ENCODE measurements at regions of chr1 and their contacts with region 1.

Region 1: GRCh38 chr1:150293433-150294168 is at the start of gene MRPS21:
- DNase-seq: peak; percentile 94
- H3K4me3 Mint-ChIP-seq: peak within 1 kb of the TSS; percentile 96
- H3K27ac Mint-ChIP-seq: peak within 1 kb of the TSS; percentile 94
- H3K4me1 Mint-ChIP-seq: peaks cover 39% of the 10 kb centered on the region
- H3K27me3 Mint-ChIP-seq: no peaks in the 10 kb centered on the region
- total RNA-seq, gene MRPS21: 78.6 to 82.9 TPM

Region 2: DNA sequence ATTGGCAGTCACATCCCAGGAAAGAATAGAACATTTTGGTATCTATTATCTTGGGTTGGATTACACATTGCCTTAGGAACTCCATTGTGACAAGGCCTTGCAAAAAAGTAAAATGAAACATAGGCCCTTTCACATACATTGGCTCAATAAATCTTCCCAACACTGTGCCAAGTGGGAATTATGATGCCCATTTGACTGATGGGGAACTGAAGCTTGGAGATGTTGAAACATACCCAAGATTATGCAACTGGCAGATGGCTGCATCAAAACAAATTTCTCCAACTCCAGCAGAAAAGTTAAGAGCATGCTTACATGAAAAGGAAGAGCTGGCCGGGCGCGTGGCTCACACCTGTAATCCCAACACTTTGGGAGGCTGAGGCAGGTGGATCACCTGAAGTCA is 117.0 kb before region 1 on chr1:
- CTCF ChIA-PET with region 1: no interaction called
- POLR2A ChIA-PET with region 1: no interaction called
- intact Hi-C with region 1: no loop called
- DNase-seq: no peak
- H3K4me3 Mint-ChIP-seq: no peak overlapping the region
- H3K27ac Mint-ChIP-seq: no peak overlapping the region
- H3K4me1 Mint-ChIP-seq: no peaks in the 10 kb centered on the region
- H3K27me3 Mint-ChIP-seq: no peaks in the 10 kb centered on the region

Region 3: GRCh38 chr1:150268705-150269403 is 24.7 kb before region 1 on chr1 and contains the start of gene APH1A:
- CTCF ChIA-PET with region 1: no interaction called
- POLR2A ChIA-PET with region 1: interaction called, 4 read pairs
- intact Hi-C with region 1: loop called (anchors 1 kb)
- DNase-seq: peak; percentile 97
- H3K4me3 Mint-ChIP-seq: peak within 1 kb of the TSS; percentile 97
- H3K27ac Mint-ChIP-seq: peak within 1 kb of the TSS; percentile 93
- H3K4me1 Mint-ChIP-seq: peaks cover 22% of the 10 kb centered on the region
- H3K27me3 Mint-ChIP-seq: no peaks in the 10 kb centered on the region
- total RNA-seq, gene APH1A: 96.6 to 96.8 TPM

Region 4: DNA sequence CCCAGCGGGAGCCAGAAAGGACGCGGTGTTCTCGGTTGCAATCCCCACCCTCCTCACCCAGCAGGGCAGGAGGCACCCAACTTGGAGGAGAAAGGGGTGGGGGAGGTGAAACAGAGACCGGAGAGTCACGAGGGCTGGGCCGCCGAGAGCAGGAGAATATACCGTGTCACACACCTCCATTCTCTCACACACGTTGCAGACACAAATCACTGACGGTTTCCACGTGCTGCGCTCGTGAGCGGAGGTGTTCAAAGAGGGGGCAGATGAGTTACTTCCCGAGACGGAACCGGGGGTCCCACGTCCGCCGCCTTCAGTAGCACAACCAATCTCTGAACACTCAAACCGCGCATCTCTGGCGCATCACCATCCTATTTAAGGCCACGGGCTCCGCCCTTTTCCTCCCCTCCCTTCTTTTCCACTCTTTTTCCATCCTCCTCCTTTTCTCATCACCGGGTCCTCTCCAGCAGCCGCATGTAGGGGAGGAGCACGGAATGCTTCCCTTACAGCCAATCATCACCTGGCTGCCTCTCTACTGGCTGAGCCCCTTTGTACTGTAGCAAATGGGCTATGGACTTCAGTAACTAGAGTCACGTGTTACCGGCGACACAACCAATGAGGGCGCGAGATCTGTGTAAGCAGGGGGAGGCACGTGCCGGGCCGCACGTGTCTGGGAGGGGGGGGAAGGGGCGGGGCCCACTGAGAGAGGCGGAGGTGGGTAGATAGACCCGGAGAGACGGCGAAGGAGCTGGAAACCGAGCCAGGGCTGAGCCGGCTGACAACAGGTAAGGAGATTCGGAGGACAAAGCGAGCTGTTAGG is 11.6 kb before region 1 on chr1 and contains the start of gene CIART:
- CTCF ChIA-PET with region 1: interaction called, 4 read pairs
- POLR2A ChIA-PET with region 1: no interaction called
- intact Hi-C with region 1: loop called (anchors 1 kb)
- DNase-seq: peak; percentile 86
- H3K4me3 Mint-ChIP-seq: peak within 1 kb of the TSS; percentile 76
- H3K27ac Mint-ChIP-seq: peak within 1 kb of the TSS; percentile 40
- H3K4me1 Mint-ChIP-seq: peaks cover 27% of the 10 kb centered on the region
- H3K27me3 Mint-ChIP-seq: no peaks in the 10 kb centered on the region
- total RNA-seq, gene CIART: 1.3 to 1.5 TPM

Region 5: GRCh38 chr1:150321826-150322166 is 28.2 kb after region 1 on chr1:
- CTCF ChIA-PET with region 1: no interaction called
- POLR2A ChIA-PET with region 1: interaction called, 3 read pairs
- intact Hi-C with region 1: loop called (anchors 1 kb)
- DNase-seq: no peak
- H3K4me3 Mint-ChIP-seq: peak overlapping the region; percentile 99
- H3K27ac Mint-ChIP-seq: peak overlapping the region; percentile 97
- H3K4me1 Mint-ChIP-seq: peaks cover 27% of the 10 kb centered on the region
- H3K27me3 Mint-ChIP-seq: no peaks in the 10 kb centered on the region

Region 6: GRCh38 chr1:150578965-150579798 is 285.6 kb after region 1 on chr1 and contains the start of gene MCL1:
- CTCF ChIA-PET with region 1: no interaction called
- POLR2A ChIA-PET with region 1: no interaction called
- intact Hi-C with region 1: no loop called
- DNase-seq: peak; percentile 95
- H3K4me3 Mint-ChIP-seq: peak within 1 kb of the TSS; percentile 93
- H3K27ac Mint-ChIP-seq: peak within 1 kb of the TSS; percentile 98
- H3K4me1 Mint-ChIP-seq: peaks cover 27% of the 10 kb centered on the region
- H3K27me3 Mint-ChIP-seq: peaks cover 2% of the 10 kb centered on the region
- total RNA-seq, gene MCL1: 280 to 288 TPM

Region 7: DNA sequence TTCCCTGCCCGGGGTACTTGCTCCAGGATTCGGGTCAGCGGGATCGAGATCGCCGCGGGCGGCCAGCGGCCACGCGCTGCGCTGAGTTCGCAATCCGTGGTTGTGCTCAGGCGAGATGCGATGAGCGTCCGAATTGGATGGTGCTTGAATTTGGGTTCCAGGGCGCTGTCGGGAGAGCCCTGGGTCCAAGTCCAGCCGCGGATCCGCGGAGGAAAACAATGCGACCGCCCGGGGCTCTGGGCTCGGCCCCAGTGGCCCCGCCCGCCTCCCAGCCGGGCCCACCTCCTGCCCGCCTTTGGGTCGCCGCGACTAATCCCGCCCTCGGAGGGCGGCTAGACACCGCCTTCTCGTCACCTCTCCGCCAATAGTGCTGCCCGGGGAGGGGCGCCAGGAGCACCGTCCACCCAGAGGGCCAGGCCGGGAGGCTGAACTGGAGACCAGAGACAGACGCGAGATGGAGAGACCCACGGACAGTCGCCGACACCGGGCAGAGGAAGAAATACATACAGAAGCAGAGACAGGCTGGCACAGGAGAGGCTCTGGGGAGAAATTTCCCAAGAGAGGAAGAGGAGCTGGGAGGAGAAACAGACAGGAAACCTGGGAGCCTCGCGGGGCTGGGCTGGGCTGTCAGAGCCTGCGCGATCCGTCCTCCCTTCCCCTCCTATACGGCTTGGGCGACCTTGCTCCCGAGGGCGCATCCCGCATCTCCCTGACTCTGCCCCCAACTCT is 853.0 kb after region 1 on chr1 and contains the start of gene SEMA6C:
- CTCF ChIA-PET with region 1: no interaction called
- POLR2A ChIA-PET with region 1: no interaction called
- intact Hi-C with region 1: no loop called
- DNase-seq: peak; percentile 92
- H3K4me3 Mint-ChIP-seq: peak within 1 kb of the TSS; percentile 77
- H3K27ac Mint-ChIP-seq: peak within 1 kb of the TSS; percentile 1
- H3K4me1 Mint-ChIP-seq: peaks cover 6% of the 10 kb centered on the region
- H3K27me3 Mint-ChIP-seq: no peaks in the 10 kb centered on the region
- total RNA-seq, gene SEMA6C: 1.9 to 2.5 TPM

Measured in activated CD4-positive, alpha-beta memory T cell treated with anti-CD3 and anti-CD28 coated beads for 36 hours (primary cell).